Endothelial cell of umbilical vein (primary cell): ENCODE measurements at regions of chr22 and their contacts with region 1.

Region 1: DNA sequence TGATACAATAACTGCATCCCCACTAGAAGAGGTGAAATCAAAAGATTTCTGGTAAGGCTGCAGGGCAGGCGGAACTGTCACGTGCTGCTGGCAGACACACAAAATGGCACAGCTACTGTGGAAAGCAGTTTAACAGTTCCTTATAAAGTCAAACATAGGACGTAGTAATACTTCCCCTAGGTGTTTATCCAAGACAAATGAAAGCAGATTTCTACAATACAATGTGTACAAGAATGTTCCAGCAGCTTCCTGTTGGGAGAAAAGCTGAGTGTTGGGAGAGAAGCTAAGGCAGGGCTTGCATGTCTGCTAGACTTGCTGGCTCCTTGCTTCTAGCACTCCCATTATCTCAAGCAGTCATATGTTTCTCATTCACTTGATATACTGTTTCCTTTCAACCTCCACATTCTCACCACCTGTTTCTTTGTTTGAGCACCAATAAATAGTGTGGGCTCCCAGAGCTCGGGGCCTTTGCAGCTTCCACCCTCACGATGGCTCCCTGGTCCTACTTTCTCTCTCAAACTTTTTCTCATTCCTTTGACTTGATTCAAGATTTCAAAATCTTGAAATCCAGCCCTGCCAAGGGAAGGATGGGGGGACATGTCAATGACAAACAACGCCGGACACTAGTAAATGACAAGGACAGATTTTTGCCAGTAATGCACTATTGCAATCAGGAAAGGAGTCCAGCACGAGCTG is 21.2 kb upstream of the IL17RA start:
- DNase-seq: peak; percentile 95
- H3K4me3 ChIP-seq: peak overlapping the region in 1 of 3 experiments; percentile 19
- H3K27ac ChIP-seq: peak overlapping the region; percentile 92
- H3K4me1 ChIP-seq: peaks cover 33% of the 10 kb centered on the region
- H3K27me3 ChIP-seq: peaks cover 0 to 8% of the 10 kb centered on the region in 2 experiments
- CTCF ChIP-seq: no peak
- POLR2A ChIP-seq: peak; percentile 34

Region 2: GRCh38 chr22:16974298-16975084 is 89.1 kb before region 1 on chr22:
- CTCF ChIA-PET with region 1: no interaction called
- POLR2A ChIA-PET with region 1: no interaction called
- dilution Hi-C with region 1: no loop called
- intact Hi-C with region 1: no loop called
- DNase-seq: no peak
- H3K4me3 ChIP-seq: no peak overlapping the region
- H3K27ac ChIP-seq: no peak overlapping the region
- H3K4me1 ChIP-seq: no peaks in the 10 kb centered on the region
- H3K27me3 ChIP-seq: no peaks in the 10 kb centered on the region
- CTCF ChIP-seq: no peak
- POLR2A ChIP-seq: no peak

Region 3: DNA sequence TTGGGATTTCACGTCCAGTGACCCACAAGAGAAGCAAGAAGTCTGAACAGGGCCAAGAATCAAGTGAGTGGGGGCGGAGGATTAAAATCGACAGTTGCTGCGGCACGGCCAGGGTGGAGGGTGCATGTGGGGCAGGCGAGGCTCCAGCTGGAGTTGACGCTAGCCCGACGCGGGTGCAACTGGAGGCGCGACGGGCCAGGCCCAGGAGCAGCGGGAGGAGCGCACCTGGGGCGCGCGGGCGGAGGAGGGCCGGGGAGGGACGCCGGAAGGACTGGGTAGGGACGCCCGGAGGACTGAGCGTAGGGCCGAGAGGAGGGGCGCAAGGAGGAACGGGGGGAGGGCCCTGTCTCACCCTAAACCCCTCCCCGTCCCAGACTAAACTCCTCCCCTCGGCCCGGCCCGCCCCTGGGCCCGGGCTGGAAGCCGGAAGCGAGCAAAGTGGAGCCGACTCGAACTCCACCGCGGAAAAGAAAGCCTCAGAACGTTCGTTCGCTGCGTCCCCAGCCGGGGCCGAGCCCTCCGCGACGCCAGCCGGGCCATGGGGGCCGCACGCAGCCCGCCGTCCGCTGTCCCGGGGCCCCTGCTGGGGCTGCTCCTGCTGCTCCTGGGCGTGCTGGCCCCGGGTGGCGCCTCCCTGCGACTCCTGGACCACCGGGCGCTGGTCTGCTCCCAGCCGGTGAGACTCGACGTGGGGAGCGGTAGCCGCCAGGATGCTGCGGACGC is 21.2 kb after region 1 on chr22 and contains the start of gene IL17RA:
- CTCF ChIA-PET with region 1: no interaction called
- POLR2A ChIA-PET with region 1: no interaction called
- dilution Hi-C with region 1: no loop called
- intact Hi-C with region 1: loop called (anchors 1 kb)
- DNase-seq: peak; percentile 85
- H3K4me3 ChIP-seq: peak within 1 kb of the TSS; percentile 62 to 65 (median 64)
- H3K27ac ChIP-seq: peak within 1 kb of the TSS; percentile 52
- H3K4me1 ChIP-seq: peaks cover 18% of the 10 kb centered on the region
- H3K27me3 ChIP-seq: no peaks in the 10 kb centered on the region
- CTCF ChIP-seq: no peak
- POLR2A ChIP-seq: peak; percentile 76
- total RNA-seq, gene IL17RA: 13.0 and 19.0 TPM in 2 replicates